BJ (cell line): ENCODE measurements at regions of chr11 and their contacts with region 1.

Region 1: DNA sequence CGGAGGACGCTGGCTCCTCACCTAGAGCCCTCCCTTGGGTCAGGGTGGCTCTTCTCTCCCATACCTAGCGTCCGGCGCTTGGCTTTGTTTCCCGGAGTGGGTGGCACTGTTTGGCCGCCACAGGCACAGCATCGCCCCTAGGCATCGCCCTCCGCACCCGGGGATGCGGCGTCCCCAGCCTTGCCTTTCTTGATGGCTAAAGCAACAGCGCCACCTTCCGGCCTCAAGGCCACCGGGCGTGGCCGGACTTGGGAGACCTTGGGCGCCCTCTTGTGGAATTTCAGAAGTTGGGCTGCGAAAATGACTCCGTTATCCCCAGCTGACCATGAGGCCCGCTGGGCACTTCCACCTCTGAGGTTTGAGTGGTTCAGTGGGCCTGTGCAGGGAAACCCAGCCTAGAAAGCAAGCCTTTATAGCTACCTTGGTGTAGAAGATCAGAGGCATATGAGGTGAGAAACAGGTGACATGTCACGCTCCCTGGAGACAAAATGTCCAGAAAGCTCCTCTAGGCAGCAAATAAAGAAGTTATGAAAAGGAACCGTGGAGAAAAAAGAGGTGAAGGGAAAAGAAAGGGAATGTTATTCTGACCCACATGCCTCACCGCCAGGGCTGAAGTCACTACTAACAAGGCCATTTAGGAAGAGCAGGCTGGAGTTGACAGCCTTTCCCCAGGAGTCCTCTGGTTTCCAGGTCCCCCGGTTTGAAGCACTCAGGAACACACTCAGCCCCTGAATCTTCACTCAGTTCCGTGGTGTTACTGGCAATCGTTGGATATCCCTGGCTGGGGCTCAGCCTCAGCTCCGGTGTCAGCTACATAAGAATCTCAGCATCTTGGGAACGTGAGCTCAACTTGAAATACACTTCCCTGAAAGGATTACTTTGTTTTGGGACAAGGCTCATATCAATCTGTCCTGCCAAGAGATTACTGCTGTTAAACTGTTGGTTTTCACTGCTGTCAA is 54.1 kb downstream of the SNX19 start:
- DNase-seq: no peak
- H3K4me3 ChIP-seq: no peak overlapping the region
- H3K27me3 ChIP-seq: no peaks in the 10 kb centered on the region
- CTCF ChIP-seq: peak; percentile 99

Region 2: GRCh38 chr11:130442737-130443136 is 419.4 kb before region 1 on chr11:
- CTCF ChIA-PET with region 1: interaction called, 421 read pairs
- POLR2A ChIA-PET with region 1: no interaction called
- DNase-seq: no peak
- H3K4me3 ChIP-seq: no peak overlapping the region
- H3K27me3 ChIP-seq: no peaks in the 10 kb centered on the region
- CTCF ChIP-seq: no peak

Region 3: GRCh38 chr11:130772266-130773227 is 89.6 kb before region 1 on chr11:
- CTCF ChIA-PET with region 1: interaction called, 14 read pairs
- POLR2A ChIA-PET with region 1: no interaction called
- DNase-seq: peak; percentile 83
- H3K4me3 ChIP-seq: no peak overlapping the region
- H3K27me3 ChIP-seq: no peaks in the 10 kb centered on the region
- CTCF ChIP-seq: no peak

Region 4: DNA sequence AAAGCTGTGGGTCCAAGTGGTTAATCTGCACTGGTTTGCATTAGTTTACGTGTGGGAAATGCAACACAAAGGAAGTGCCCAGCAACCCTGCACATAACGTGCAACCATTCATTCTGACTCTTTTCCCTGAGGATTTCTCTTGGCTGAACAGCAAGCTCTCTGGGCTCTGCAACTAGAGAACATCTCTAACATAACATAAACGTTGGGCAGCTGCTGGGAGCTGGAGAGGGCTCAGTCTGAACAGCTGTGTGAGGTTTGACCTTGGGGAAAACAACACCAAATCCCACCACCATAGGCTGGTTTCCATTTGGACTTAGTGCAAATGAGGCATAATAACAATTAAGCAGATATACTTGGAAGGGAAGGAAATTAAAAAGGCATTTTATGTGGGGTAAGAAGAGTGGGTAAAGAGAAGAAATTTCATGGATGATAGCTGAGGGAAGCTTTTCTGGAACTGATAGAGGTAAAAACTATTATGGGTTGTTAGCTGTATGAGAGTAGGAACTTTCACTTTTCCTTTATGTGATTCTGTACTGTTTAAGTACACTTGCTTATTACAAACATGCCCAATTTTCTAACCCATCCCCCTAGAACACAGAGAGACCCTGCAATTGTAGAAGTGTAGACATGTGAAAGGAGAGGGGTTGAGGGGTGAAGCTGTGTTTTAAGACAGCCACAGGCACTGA is 22.1 kb before region 1 on chr11:
- CTCF ChIA-PET with region 1: interaction called, 24 read pairs
- POLR2A ChIA-PET with region 1: no interaction called
- DNase-seq: no peak
- H3K4me3 ChIP-seq: no peak overlapping the region
- H3K27me3 ChIP-seq: no peaks in the 10 kb centered on the region
- CTCF ChIP-seq: no peak

Region 5: DNA sequence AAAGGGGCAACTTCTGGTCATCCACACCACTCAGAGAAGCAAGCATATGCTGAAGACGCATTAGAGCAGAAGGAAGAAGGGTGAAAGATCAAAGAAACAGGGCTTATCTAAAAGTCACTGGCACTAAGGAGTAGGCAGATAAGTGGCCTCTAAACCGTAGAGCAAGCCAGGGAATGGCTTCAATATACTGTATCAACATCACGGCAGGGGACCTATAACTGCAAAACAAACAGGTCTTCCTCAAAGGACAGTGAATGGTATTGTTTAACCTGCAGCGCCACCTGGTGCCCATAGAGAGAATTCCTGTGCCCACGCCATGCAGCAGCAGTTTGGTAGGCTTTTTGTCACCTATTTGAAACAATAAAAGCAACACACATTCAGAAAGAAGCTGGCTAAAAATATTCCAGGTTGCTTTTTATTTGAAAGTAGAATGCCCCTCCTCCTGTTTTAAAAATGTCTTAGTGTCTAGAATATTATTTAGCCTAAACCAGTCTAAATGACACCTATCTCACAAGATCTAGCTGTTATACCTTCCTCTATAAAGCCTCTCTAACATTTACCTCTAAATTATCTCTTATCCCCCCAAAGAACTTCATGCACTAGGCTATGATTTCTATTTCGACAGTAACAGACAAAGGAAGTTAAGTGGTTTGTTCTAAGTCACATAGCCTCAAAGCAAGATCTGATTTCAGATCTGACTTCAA is 32.3 kb after region 1 on chr11:
- CTCF ChIA-PET with region 1: interaction called, 35 read pairs
- POLR2A ChIA-PET with region 1: no interaction called
- DNase-seq: no peak
- H3K4me3 ChIP-seq: no peak overlapping the region
- H3K27me3 ChIP-seq: no peaks in the 10 kb centered on the region
- CTCF ChIP-seq: peak; percentile 89